Thyroid gland (tissue), 4 donors: ENCODE measurements at regions of chr6 and their contacts with region 1.

Region 1: GRCh38 chr6:28355743-28356665 is 6.3 kb downstream of the ZKSCAN3 start:
- DNase-seq: peak; percentile 79 to 85
- H3K4me3 ChIP-seq: peak overlapping the region; percentile 44 to 62 (median 49)
- H3K27ac ChIP-seq: peak overlapping the region; percentile 73 to 91 (median 91)
- H3K4me1 ChIP-seq: peaks cover 8 to 27% of the 10 kb centered on the region in 2 donors
- H3K27me3 ChIP-seq: no peaks in the 10 kb centered on the region
- CTCF ChIP-seq: peak; percentile 78 to 92 (median 88)
- POLR2A ChIP-seq: peak in 1 of 2 donors; percentile 17

Region 2: GRCh38 chr6:28124971-28125353 is 231.0 kb before region 1 on chr6:
- intact Hi-C with region 1: loop called (anchors 5 kb)
- DNase-seq: no peak
- H3K4me3 ChIP-seq: peak overlapping the region in 2 of 3 donors; percentile 52 to 80
- H3K27ac ChIP-seq: peak overlapping the region in 1 of 3 donors; percentile 21
- H3K4me1 ChIP-seq: peaks cover 4 to 13% of the 10 kb centered on the region in 2 donors
- H3K27me3 ChIP-seq: no peaks in the 10 kb centered on the region
- CTCF ChIP-seq: no peak
- POLR2A ChIP-seq: no peak

Region 3: DNA sequence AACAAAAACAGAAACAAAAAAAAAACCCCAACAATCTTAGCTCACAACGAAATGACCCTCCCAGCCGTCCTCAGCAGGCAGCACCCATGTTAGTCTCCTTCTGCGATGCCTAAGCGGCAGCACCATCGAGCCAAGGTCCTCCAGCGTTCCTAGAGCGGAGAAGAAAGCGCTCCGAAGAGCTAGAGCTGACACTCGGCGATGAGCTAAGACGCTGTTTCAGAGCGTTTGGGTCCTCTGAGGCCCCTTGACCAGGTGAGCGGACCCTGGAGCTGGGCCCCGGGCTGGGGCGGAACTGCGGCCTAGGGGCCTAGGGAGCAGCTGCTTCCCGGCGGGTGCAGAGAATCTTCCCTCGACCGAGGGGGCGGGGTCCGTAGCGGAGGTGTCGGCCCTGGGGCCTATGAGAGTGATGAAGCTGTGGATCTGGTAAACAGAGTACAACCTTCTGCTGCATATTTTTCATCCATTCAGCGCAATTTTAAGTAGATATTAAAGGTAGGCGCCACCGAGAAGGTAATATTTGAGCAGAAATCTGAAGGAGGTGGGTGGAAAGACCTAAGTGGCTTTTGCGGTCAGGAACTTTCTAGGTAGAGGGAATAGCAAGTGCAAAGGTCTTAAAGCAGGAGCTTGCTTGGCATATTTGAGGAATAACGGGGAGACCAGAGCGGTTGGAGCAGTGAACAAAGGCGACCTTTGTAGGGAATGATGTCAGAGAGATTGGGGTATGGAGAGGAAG is 88.9 kb before region 1 on chr6 and contains the start of gene ZSCAN26:
- intact Hi-C with region 1: loop called (anchors 10 kb)
- DNase-seq: peak; percentile 76 to 81
- H3K4me3 ChIP-seq: peak within 1 kb of the TSS; percentile 45 to 98 (median 64)
- H3K27ac ChIP-seq: peak within 1 kb of the TSS; percentile 76 to 86 (median 76)
- H3K4me1 ChIP-seq: peaks cover 8 to 11% of the 10 kb centered on the region in 2 donors
- H3K27me3 ChIP-seq: no peaks in the 10 kb centered on the region
- CTCF ChIP-seq: peak in 1 of 6 experiments; percentile 1
- POLR2A ChIP-seq: peak in 1 of 2 donors; percentile 57
- total RNA-seq, gene ZSCAN26: 20.9 to 41.2 (median 36.2) TPM